ENCODE measurements at regions of chr11 and their contacts with region 1.

Region 1: GRCh38 chr11:123246749-123247495 is 51.9 kb upstream of the CLMP start:
- DNase-seq: peak; percentile 81
- CTCF ChIP-seq: peak; percentile 90

Region 2: GRCh38 chr11:123110356-123110755 is 136.6 kb before region 1 on chr11:
- in situ Hi-C with region 1: loop called (anchors 5 kb)
- DNase-seq: no peak
- CTCF ChIP-seq: no peak

Region 3: DNA sequence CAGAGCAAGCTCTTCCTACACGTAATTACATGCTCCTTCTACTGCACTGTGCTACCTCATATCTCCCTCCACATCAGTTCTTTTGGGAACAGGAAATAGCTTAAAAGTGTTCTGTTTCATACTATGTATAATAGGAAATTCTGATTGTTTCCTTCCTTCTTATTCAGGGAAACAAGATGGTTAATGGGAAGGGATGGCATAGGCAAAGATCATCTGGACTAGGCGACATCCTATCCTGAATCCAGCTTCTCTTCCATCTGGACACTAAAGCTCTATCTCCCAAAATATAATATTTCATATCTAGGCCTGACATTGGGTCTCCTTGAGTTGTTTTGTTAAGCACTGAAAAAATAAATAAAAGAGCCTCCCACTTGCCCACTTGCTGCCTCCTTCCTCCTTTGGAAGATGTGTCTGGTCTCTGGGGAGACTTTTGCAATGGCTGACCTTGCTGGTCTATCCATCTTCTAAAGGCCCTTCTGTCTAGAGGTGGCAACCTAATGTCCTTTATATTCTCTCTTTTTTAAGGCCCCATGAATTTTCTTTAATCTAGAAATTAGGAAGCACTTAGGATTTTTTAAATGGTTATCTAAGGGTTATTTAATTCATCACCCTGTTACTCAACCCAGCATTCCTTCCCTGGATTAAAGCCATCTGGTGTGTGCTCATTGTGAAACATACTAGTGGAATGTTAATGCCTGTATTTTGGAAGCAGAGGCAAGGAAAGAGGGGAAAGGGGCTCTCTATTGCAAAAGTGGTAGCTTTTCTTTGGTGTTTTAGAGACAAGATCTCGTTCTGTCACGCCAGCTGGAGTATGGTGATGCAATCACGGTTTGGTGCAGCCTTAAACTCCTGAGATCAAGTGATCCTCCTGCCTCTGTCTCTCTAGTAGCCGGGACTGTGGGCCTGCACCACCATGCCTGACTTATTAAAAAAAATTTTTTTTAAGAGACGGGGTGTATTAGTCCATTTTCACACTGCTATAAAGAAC is 72.4 kb before region 1 on chr11:
- in situ Hi-C with region 1: loop called (anchors 10 kb)
- DNase-seq: no peak
- CTCF ChIP-seq: no peak

Measured in GM13976 (cell line).